Stomach (tissue), 19 donors: ENCODE measurements at regions of chr9 and their contacts with region 1.

Region 1: GRCh38 chr9:133782157-133783130 is 44.3 kb upstream of the SARDH start:
- DNase-seq: peak; percentile 80 to 92
- H3K4me3 ChIP-seq: no peak overlapping the region
- H3K27ac ChIP-seq: no peak overlapping the region
- H3K4me1 ChIP-seq: peaks cover 0 to 6% (median 3%) of the 10 kb centered on the region in 4 donors
- H3K27me3 ChIP-seq: no peaks in the 10 kb centered on the region
- CTCF ChIP-seq: peak in 5 of 7 experiments; percentile 65 to 80 (median 73)
- EP300 ChIP-seq: no peak
- POLR2A ChIP-seq: no peak

Region 2: GRCh38 chr9:133657120-133657661 is 125.3 kb before region 1 on chr9:
- intact Hi-C with region 1: no loop called
- DNase-seq: no peak
- H3K4me3 ChIP-seq: no peak overlapping the region
- H3K27ac ChIP-seq: no peak overlapping the region
- H3K4me1 ChIP-seq: peaks cover 10 to 17% (median 15%) of the 10 kb centered on the region in 4 donors
- H3K27me3 ChIP-seq: peaks cover 3 to 94% (median 47%) of the 10 kb centered on the region in 3 donors
- CTCF ChIP-seq: no peak
- EP300 ChIP-seq: no peak
- POLR2A ChIP-seq: no peak

Region 3: GRCh38 chr9:134099123-134099787 is 316.8 kb after region 1 on chr9:
- intact Hi-C with region 1: loop called (anchors 10 kb)
- DNase-seq: peak; percentile 50 to 66
- H3K4me3 ChIP-seq: no peak overlapping the region
- H3K27ac ChIP-seq: no peak overlapping the region
- H3K4me1 ChIP-seq: no peaks in the 10 kb centered on the region
- H3K27me3 ChIP-seq: peaks cover 0 to 20% (median 0%) of the 10 kb centered on the region in 3 donors
- CTCF ChIP-seq: peak in 5 of 7 experiments; percentile 62 to 80 (median 72)
- EP300 ChIP-seq: no peak
- POLR2A ChIP-seq: no peak